CD4-positive, alpha-beta T cell (primary cell): ENCODE measurements at regions of chr11 and their contacts with region 1.

Region 1: DNA sequence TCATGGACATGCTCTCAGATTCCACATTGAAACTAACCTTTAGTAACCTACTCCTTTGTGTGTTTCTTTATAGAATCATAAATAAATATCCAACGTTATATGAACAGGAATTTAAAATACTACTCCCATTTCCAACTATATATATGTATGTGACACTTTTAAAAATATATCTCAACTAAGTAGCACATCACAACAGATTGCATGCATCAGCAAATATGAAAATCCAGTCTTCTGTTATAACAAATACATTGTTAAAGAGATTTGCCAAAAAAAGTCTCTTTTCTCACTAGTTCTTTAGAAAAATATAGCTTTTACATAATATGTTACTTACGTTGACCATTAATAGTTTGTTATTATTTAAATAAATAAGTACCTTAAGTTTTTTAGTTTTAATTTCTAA is 1608.6 kb upstream of the RAG2 start:
- DNase-seq: no peak
- ATAC-seq: no peak
- H3K4me3 ChIP-seq: no peak overlapping the region
- H3K4me3 Mint-ChIP-seq: no peak overlapping the region
- H3K27ac ChIP-seq: no peak overlapping the region
- H3K27ac Mint-ChIP-seq: no peak overlapping the region
- H3K4me1 ChIP-seq: no peaks in the 10 kb centered on the region
- H3K4me1 Mint-ChIP-seq: no peaks in the 10 kb centered on the region
- H3K27me3 ChIP-seq: no peaks in the 10 kb centered on the region
- H3K27me3 Mint-ChIP-seq: no peaks in the 10 kb centered on the region
- CTCF ChIP-seq: no peak

Region 2: GRCh38 chr11:38266691-38267090 is 60.0 kb after region 1 on chr11:
- CTCF ChIA-PET with region 1: no interaction called
- POLR2A ChIA-PET with region 1: no interaction called
- intact Hi-C with region 1: loop called (anchors 10 kb)
- DNase-seq: no peak
- ATAC-seq: no peak
- H3K4me3 ChIP-seq: no peak overlapping the region
- H3K4me3 Mint-ChIP-seq: no peak overlapping the region
- H3K27ac ChIP-seq: no peak overlapping the region
- H3K27ac Mint-ChIP-seq: no peak overlapping the region
- H3K4me1 ChIP-seq: no peaks in the 10 kb centered on the region
- H3K4me1 Mint-ChIP-seq: no peaks in the 10 kb centered on the region
- H3K27me3 ChIP-seq: no peaks in the 10 kb centered on the region
- H3K27me3 Mint-ChIP-seq: no peaks in the 10 kb centered on the region
- CTCF ChIP-seq: no peak